PC-3 (cell line): ENCODE measurements at regions of chr17 and their contacts with region 1.

Region 1: DNA sequence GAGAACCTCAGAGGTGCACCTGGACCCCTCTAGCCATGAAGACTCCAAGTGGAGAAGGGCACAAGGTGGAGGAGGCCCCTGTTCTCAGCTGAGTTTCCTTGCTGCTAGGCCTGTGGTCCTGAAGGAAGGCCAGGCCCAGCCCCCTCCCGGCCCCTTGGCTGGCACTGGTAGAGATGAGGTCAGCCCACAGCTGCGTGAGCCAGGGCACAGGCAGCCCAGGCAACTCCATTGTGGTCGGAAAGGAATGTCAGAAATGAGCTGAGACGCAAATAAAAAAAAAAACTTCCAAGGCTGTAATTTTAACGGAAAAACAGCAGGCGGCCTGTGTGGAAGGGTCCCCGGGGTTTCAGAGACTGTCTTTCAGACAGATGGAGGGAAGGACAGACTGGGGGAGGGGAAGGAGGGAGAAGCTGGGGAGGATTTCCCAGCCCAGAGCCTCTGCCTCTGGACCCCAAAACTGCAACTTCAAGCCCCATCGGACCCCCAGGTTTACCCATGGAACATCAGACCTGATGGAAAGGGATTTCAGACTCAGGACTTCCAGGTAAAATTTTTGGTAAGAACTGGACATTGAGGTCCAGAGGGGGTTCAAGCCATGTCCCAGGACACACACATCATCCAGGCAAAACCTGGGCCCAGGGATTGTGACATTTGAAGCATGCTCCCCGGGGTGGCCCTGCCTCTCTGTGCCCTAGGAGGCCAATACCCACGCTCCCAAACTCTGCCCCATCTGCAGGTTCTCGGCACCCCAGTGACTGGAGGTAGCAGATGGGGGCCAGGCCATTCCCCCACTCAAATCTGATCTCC is 25.7 kb upstream of the MRPS23 start:
- DNase-seq: peak; percentile 99
- ATAC-seq: peak; percentile 80
- H3K4me3 ChIP-seq: peak overlapping the region; percentile 16; the same call in 1 of the 2 replicates
- H3K27ac ChIP-seq: peak overlapping the region; percentile 65
- H3K4me1 ChIP-seq: peaks cover 70% of the 10 kb centered on the region
- H3K27me3 ChIP-seq: no peaks in the 10 kb centered on the region
- CTCF ChIP-seq: peak; percentile 80

Region 2: DNA sequence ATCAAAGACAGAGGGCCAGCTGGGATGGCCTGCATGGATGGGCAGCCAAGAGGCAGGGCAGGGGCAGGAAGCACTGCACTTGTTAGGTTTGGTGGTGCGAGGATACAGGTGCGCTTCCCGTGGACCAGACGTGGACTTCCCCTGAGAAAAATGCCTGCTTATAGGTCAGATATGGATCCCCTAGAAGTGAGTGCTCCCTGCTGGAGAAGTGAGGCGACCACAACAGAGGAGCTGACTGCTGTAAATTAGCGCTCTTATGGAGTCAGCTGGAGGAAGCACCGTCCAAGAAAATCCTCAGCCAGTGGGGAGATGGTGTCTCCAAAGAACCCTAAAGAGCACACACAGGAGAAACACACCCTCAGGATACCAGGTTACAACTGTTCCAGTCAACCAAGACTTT is 102.7 kb before region 1 on chr17:
- CTCF ChIA-PET with region 1: no interaction called
- POLR2A ChIA-PET with region 1: no interaction called
- intact Hi-C with region 1: no loop called
- DNase-seq: no peak
- ATAC-seq: no peak
- H3K4me3 ChIP-seq: no peak overlapping the region
- H3K27ac ChIP-seq: no peak overlapping the region
- H3K4me1 ChIP-seq: no peaks in the 10 kb centered on the region
- H3K27me3 ChIP-seq: peaks cover 59% of the 10 kb centered on the region
- CTCF ChIP-seq: no peak; the same call in 1 of the 2 replicates

Region 3: GRCh38 chr17:57849874-57850754 is 25.4 kb before region 1 on chr17 and contains the start of gene MRPS23:
- CTCF ChIA-PET with region 1: no interaction called
- POLR2A ChIA-PET with region 1: interaction called, 3 read pairs
- intact Hi-C with region 1: loop called (anchors 1 kb)
- DNase-seq: peak; percentile 100
- ATAC-seq: peak; percentile 91
- H3K4me3 ChIP-seq: peak within 1 kb of the TSS; percentile 90
- H3K27ac ChIP-seq: peak within 1 kb of the TSS; percentile 55
- H3K4me1 ChIP-seq: peaks cover 14% of the 10 kb centered on the region
- H3K27me3 ChIP-seq: no peaks in the 10 kb centered on the region
- CTCF ChIP-seq: no peak
- total RNA-seq, gene MRPS23: 63.9 and 97.5 TPM in 2 replicates

Region 4: DNA sequence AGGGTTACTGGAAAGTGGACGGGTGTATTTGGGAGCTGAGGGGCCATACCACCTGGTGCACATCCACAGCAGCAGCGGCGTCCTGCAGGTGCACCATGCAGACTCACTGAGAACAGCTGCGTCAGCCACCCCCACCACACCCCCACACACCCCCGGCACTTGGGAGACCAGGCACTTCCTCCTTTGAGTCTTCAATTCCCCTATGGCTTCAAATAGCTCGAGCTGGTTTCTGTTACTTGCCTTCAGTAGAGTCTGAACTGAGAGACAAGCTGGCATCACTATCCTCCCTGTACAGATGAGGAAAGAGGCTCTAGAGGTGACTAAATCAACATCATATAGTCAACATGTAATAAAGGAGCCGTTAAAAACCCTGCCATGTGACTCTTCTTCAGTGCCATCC is 64.3 kb after region 1 on chr17:
- CTCF ChIA-PET with region 1: no interaction called
- POLR2A ChIA-PET with region 1: interaction called, 10 read pairs
- intact Hi-C with region 1: loop called (anchors 2 kb)
- DNase-seq: no peak
- ATAC-seq: no peak
- H3K4me3 ChIP-seq: no peak overlapping the region
- H3K27ac ChIP-seq: peak overlapping the region; percentile 52
- H3K4me1 ChIP-seq: peaks cover 69% of the 10 kb centered on the region
- H3K27me3 ChIP-seq: no peaks in the 10 kb centered on the region
- CTCF ChIP-seq: no peak

Region 5: GRCh38 chr17:57954395-57955182 is 79.1 kb after region 1 on chr17:
- CTCF ChIA-PET with region 1: interaction called, 4 read pairs
- POLR2A ChIA-PET with region 1: interaction called, 4 read pairs
- intact Hi-C with region 1: loop called (anchors 1 kb)
- DNase-seq: peak; percentile 76
- ATAC-seq: peak; percentile 70
- H3K4me3 ChIP-seq: peak overlapping the region; percentile 80
- H3K27ac ChIP-seq: peak overlapping the region; percentile 73
- H3K4me1 ChIP-seq: peaks cover 54% of the 10 kb centered on the region
- H3K27me3 ChIP-seq: no peaks in the 10 kb centered on the region
- CTCF ChIP-seq: no peak

Region 6: DNA sequence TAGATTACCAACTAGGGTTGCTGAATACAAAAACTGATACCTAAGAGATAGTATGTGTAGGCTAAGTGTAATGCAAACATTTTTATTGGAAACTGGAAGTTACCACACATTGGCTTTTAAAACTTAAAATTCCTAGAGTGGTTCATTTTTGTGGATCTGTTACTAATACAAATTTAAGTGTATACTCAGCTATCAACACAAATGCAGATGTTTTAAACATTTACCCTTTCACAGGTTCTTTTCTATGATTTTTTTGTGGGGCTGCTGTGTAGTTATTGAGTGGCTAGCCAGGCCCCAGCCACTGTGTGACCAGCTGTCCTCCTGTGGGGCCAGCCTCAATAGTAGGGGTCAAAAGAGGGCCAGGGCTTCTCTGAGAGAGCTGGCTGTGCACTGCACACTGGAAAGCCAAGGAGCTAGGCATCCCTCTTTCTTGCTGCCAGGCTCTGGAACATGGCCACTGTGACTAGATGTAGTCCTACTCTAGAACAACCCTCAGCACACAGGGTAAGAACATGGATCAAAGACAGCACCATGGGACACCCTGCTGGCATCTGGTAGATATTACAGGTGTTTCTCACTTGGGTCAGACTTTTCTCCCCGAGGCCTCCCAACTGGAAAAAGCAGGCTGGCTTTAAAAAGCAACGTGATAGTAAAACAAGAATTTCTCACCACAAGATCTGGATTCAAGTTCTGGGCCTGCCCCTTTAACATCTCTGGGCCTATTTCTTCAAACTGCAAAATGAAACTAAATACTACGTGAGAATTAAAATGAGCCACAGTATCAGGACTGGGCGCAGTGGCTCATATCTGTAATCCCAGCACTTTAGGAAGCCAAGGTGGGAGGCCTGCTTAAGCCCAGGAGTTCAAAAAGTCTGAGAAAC is 119.8 kb after region 1 on chr17:
- CTCF ChIA-PET with region 1: interaction called, 10 read pairs
- POLR2A ChIA-PET with region 1: interaction called, 5 read pairs
- intact Hi-C with region 1: loop called (anchors 1 kb)
- DNase-seq: peak; percentile 87
- ATAC-seq: peak; percentile 82
- H3K4me3 ChIP-seq: no peak overlapping the region
- H3K27ac ChIP-seq: no peak overlapping the region
- H3K4me1 ChIP-seq: no peaks in the 10 kb centered on the region
- H3K27me3 ChIP-seq: no peaks in the 10 kb centered on the region
- CTCF ChIP-seq: peak; percentile 90

Region 7: GRCh38 chr17:58006924-58007780 is 131.6 kb after region 1 on chr17 and contains the start of gene SRSF1:
- CTCF ChIA-PET with region 1: no interaction called
- POLR2A ChIA-PET with region 1: no interaction called
- intact Hi-C with region 1: no loop called
- DNase-seq: peak; percentile 99
- ATAC-seq: peak; percentile 87
- H3K4me3 ChIP-seq: peak within 1 kb of the TSS; percentile 96
- H3K27ac ChIP-seq: peak within 1 kb of the TSS; percentile 90
- H3K4me1 ChIP-seq: peaks cover 29% of the 10 kb centered on the region
- H3K27me3 ChIP-seq: no peaks in the 10 kb centered on the region
- CTCF ChIP-seq: no peak
- total RNA-seq, gene SRSF1: 325 and 342 TPM in 2 replicates